Endothelial cell of umbilical vein (primary cell): ENCODE measurements at regions of chr18 and their contacts with region 1.

Region 1: DNA sequence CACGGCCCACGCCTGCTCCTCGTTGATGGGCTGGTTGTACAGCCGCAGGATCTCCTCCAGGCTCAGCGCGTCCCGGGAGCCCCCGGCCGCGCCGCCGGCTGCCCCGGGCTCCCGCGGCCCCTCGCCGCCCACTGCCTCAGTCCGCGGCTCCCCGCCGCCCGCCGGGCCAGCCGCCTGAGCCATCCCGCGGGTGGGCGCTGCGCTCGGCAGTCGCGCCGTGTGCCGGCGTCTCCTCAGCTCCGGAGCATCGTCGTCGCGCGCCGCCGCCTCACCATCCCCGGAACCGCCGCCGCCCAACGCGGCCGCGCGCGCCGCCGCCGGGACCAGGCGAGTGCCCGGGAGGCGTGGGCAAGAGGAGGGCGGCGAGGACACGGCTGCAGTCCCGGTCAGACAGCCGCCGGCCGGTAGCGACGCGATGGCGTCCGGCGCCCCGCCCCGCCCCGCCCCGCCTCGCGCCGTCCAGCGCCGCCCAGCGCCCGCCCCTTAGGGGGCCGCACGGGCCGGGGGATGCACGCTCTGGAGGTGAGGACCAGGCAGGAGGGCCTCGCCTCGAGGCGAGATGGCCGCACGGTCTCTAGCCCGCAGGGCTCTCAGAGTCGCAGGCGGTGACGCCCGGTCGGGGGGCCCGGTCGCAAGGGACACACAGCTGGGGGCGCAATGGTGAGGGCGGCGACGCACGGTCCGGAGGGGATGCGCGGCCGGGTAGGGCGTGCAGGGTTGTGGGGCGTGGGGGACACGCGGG is at the start of gene SPIRE1:
- DNase-seq: peak; percentile 72
- H3K4me3 ChIP-seq: peak within 1 kb of the TSS; percentile 65 to 99 (median 92)
- H3K27ac ChIP-seq: peak within 1 kb of the TSS; percentile 99
- H3K4me1 ChIP-seq: peaks cover 43% of the 10 kb centered on the region
- H3K27me3 ChIP-seq: no peaks in the 10 kb centered on the region
- CTCF ChIP-seq: no peak
- POLR2A ChIP-seq: peak; percentile 83
- total RNA-seq, gene SPIRE1: 44.0 and 44.8 TPM in 2 replicates

Region 2: GRCh38 chr18:12287684-12288402 is 370.0 kb before region 1 on chr18:
- CTCF ChIA-PET with region 1: no interaction called
- POLR2A ChIA-PET with region 1: no interaction called
- dilution Hi-C with region 1: no loop called
- intact Hi-C with region 1: loop called (anchors 10 kb)
- DNase-seq: peak; percentile 23
- H3K4me3 ChIP-seq: peak overlapping the region in 2 of 3 experiments; percentile 25 to 47
- H3K27ac ChIP-seq: no peak overlapping the region
- H3K4me1 ChIP-seq: no peaks in the 10 kb centered on the region
- H3K27me3 ChIP-seq: peaks cover 0 to 2% of the 10 kb centered on the region in 2 experiments
- CTCF ChIP-seq: no peak
- POLR2A ChIP-seq: no peak

Region 3: GRCh38 chr18:12391618-12392165 is 266.2 kb before region 1 on chr18:
- CTCF ChIA-PET with region 1: interaction called, 65 read pairs
- POLR2A ChIA-PET with region 1: no interaction called
- dilution Hi-C with region 1: no loop called
- intact Hi-C with region 1: loop called (anchors 1 kb)
- DNase-seq: peak; percentile 73
- H3K4me3 ChIP-seq: no peak overlapping the region
- H3K27ac ChIP-seq: no peak overlapping the region
- H3K4me1 ChIP-seq: no peaks in the 10 kb centered on the region
- H3K27me3 ChIP-seq: no peaks in the 10 kb centered on the region
- CTCF ChIP-seq: peak; percentile 89 to 97
- POLR2A ChIP-seq: no peak

Region 4: DNA sequence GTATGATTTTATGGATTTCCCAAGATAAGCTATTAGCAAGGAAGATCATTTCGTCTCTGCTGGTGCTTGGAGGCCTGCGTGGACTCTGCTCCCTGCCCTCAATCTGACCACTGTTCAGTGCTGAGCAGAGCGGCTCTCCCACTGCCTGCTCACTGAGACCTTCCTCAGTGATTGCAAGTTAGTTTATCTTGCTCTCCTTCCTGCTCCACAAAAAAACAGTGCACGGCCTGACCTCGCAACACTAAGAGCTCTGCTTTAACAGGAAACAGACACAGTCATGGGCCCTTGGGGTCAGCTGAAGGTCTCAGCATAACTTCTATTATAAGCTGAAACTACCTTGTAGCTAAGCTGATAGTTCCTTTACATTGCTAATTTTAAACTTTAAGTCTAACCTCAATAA is 197.0 kb before region 1 on chr18:
- CTCF ChIA-PET with region 1: interaction called, 6 read pairs
- POLR2A ChIA-PET with region 1: no interaction called
- dilution Hi-C with region 1: no loop called
- intact Hi-C with region 1: loop called (anchors 10 kb)
- DNase-seq: peak; percentile 94
- H3K4me3 ChIP-seq: no peak overlapping the region
- H3K27ac ChIP-seq: peak overlapping the region; percentile 7
- H3K4me1 ChIP-seq: peaks cover 46% of the 10 kb centered on the region
- H3K27me3 ChIP-seq: no peaks in the 10 kb centered on the region
- CTCF ChIP-seq: no peak
- POLR2A ChIP-seq: no peak

Region 5: DNA sequence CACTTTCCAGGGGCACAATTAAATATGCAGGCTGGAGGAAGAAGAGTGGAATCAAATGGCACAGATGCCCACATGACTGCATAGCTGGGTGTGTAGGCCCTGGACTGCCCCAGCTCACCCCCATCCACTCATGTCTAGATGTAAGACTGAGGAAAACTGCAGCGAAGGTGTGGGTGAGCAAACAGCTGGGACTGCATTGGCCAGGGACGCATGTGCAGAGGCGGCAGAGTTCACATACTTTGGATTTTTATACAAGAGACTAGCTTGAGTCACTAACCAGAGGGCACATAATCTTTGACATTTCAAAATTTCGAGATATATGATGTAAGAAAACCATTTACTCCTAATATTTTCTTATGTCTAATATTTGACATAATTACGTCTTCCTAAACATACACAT is 60.1 kb before region 1 on chr18:
- CTCF ChIA-PET with region 1: no interaction called
- POLR2A ChIA-PET with region 1: no interaction called
- dilution Hi-C with region 1: no loop called
- intact Hi-C with region 1: loop called (anchors 2 kb)
- DNase-seq: peak; percentile 79
- H3K4me3 ChIP-seq: no peak overlapping the region
- H3K27ac ChIP-seq: peak overlapping the region; percentile 87
- H3K4me1 ChIP-seq: peaks cover 58% of the 10 kb centered on the region
- H3K27me3 ChIP-seq: no peaks in the 10 kb centered on the region
- CTCF ChIP-seq: no peak
- POLR2A ChIP-seq: peak; percentile 24

Region 6: DNA sequence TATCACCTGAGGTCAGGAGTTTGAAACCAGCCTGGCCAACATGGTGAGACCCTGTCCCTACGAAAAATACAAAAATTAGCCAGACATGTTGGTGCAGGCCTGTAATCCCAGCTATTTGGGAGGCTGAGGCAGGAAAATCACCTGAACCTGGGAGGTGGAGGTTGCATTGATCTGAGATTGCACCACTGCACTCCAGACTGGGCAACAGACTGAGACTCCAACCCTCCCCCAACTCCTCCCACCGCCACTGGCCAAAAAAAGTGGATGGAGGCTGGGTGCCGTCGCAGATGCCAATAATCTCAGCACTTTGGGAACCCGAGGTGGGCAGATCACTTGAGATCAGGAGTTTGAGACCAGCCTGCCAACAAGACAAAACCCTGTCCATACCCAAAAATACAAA is 10.2 kb after region 1 on chr18:
- CTCF ChIA-PET with region 1: interaction called, 13 read pairs
- POLR2A ChIA-PET with region 1: no interaction called
- dilution Hi-C with region 1: no loop called
- intact Hi-C with region 1: no loop called
- DNase-seq: no peak
- H3K4me3 ChIP-seq: no peak overlapping the region
- H3K27ac ChIP-seq: no peak overlapping the region
- H3K4me1 ChIP-seq: no peaks in the 10 kb centered on the region
- H3K27me3 ChIP-seq: no peaks in the 10 kb centered on the region
- CTCF ChIP-seq: no peak
- POLR2A ChIP-seq: no peak

Region 7: DNA sequence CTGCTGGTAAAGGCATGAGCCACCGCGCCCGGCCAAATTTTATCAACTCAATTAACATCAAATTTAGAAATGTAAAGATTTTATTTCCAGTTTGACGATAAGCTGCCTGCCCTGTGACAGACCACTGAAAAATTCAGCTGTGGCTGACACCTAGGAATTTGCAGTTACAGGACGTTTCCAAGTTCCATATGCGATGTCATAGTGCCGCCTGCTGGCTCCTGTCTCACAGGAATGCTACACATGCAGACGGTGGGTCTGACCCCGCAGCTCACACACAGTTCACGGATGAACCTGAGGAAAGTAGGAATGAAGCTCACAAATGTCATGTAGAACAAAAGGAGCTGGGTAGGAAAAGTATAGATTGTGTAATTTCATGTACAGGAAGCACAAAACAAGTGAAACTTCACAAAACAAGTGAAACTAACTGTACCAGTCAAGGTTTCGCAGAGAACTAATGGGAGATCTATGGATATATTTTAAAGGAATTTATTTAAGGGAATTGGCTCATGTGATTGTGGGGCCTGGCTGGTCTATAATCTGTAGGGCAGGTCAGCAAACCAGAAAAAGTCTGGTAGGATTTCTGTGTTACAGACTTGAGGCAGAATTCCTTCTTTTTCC is 276.7 kb after region 1 on chr18:
- CTCF ChIA-PET with region 1: no interaction called
- POLR2A ChIA-PET with region 1: no interaction called
- dilution Hi-C with region 1: no loop called
- intact Hi-C with region 1: loop called (anchors 2 kb)
- DNase-seq: peak; percentile 80
- H3K4me3 ChIP-seq: no peak overlapping the region
- H3K27ac ChIP-seq: no peak overlapping the region
- H3K4me1 ChIP-seq: no peaks in the 10 kb centered on the region
- H3K27me3 ChIP-seq: peaks cover 4 to 5% of the 10 kb centered on the region in 2 experiments
- CTCF ChIP-seq: peak; percentile 84 to 92
- POLR2A ChIP-seq: no peak